ENCODE measurements at regions of chr3 and their contacts with region 1.

Region 1: DNA sequence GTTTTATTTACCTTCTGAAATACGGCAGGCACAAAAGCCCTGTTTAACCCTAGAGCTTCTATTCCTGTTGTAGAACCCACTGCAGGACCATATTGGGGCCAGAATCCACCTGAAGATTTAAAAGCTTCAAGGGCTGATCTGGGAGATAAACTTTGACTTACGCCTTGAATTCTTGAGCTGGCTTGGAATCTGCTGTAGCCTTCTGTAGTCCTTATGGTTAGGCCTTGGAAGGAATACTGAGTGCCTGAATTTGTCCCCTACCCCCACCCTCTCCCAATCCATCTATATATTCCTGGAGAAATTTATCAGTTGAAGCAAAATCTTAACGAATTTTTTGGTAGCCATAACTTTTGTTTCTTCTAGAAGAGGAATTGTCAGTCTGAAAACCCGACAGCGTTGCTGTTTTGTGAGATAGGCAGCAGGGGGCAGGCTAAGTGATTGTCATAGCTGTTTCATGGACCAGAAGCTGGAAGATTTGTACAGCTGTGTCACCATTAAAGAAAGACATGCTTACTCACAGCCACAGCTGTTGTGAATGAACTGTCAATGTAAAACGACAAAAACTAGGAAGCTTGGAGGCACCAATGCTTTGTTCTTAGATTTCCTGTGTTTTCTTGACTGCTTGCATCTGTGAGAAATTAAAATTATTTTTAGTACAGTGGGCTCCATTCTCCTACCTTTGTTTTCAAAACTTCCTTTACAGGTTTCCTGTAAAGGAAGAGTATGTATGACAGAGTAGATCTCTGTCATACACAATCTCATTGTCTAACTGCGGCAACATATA is 12.8 kb downstream of the LXN start:
- DNase-seq: peak; percentile 23 to 56 (median 36)
- H3K4me3 ChIP-seq: no peak overlapping the region
- H3K27ac ChIP-seq: no peak overlapping the region
- H3K4me1 ChIP-seq: no peaks in the 10 kb centered on the region
- H3K27me3 ChIP-seq: no peaks in the 10 kb centered on the region
- CTCF ChIP-seq: peak; percentile 25 to 50 (median 40)
- EP300 ChIP-seq: no peak
- POLR2A ChIP-seq: no peak

Region 2: DNA sequence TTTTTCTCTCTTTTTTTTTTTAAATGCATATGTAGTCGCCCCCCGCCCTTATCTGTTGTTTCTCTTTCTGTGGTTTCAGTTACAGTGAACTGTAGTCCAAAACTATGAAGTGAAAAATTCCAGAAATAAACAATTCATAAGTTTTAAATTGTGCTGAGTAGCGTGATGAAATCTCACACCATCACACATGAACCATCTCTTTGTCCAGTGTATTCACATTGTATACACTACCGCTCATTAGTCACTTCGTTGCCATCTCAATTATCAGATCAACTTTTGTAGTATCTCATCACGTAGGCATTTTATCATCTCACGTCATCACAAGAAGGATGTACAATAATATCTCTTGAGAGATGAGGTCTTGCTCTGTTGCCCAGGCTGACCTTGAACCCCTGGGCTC is 151.2 kb before region 1 on chr3:
- intact Hi-C with region 1: no loop called
- DNase-seq: no peak
- H3K4me3 ChIP-seq: no peak overlapping the region
- H3K27ac ChIP-seq: no peak overlapping the region
- H3K4me1 ChIP-seq: no peaks in the 10 kb centered on the region
- H3K27me3 ChIP-seq: no peaks in the 10 kb centered on the region
- CTCF ChIP-seq: no peak
- EP300 ChIP-seq: no peak
- POLR2A ChIP-seq: no peak

Region 3: DNA sequence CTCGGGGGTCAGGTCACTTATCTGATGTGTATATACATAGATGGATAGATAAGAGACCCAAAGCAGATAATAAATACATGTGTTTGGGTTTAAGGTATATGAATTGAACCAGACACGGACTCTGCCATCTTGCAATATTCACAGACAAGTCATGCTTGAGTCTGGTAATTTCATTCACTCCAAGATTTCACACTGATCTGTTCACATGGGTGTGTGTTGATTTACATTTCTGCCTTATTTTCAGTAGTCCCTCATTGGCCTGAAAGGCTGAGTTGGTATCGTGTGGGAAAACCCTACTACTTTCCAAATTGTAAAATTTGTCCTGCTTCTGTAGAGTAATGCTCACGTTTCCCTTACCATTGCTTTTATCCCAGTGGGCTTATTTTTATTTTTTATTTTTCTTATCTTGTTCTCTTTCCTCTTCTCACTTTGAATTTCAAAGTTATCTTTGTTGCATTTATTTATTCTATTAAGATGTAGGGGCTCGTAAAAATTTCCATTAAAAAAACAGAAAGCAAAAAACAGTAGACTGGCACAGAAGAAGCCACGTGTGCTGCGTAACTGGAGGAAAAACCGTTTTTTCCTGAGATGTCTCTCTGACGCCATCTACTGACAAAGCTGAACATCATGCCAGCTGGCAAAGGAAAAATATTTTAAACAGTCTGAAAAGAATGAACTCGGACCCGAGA is 131.4 kb after region 1 on chr3:
- intact Hi-C with region 1: loop called in 2 of 4 experiments (anchors 5 to 10 kb)
- DNase-seq: peak in 1 of 5 donors; percentile 45
- H3K4me3 ChIP-seq: peak overlapping the region; percentile 21
- H3K27ac ChIP-seq: no peak overlapping the region
- H3K4me1 ChIP-seq: no peaks in the 10 kb centered on the region
- H3K27me3 ChIP-seq: no peaks in the 10 kb centered on the region
- CTCF ChIP-seq: peak; percentile 71 to 83 (median 73)
- EP300 ChIP-seq: no peak
- POLR2A ChIP-seq: no peak

Region 4: DNA sequence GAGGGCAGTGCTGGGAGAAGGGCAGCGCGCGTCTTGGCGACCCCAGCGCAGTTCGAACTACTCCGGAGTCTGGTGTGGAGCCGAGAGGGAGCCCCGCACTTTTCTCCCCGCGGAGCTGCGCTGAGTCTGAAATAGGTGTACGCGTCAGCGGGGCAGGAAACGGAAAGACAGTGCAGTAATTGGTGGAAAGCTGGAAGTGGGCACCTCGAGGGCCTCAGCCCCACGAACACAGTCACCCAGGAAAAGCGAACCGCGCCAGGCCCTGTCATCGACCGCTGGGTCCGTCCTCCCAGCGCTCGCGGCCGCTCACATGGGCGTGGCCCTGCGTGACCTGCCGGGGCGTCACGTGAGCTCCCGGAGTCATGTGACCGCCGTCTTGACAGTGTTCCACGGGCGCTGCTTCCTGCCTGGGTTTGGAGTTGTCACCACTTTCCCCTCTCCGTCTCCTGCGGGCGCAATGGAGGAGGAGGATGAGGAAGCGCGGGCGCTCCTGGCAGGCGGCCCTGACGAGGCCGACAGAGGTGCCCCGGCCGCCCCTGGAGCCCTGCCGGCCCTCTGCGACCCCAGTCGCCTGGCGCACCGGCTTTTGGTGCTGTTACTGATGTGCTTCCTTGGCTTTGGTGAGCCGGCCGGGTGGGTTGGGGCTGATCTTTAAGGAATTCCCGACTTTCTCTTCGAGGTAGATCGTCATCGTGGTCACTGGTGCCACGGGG is 142.2 kb after region 1 on chr3 and contains the start of gene MFSD1:
- intact Hi-C with region 1: loop called in 2 of 4 experiments (anchors 10 kb)
- DNase-seq: peak; percentile 92 to 95 (median 93)
- H3K4me3 ChIP-seq: peak within 1 kb of the TSS; percentile 49
- H3K27ac ChIP-seq: peak within 1 kb of the TSS; percentile 51 to 83
- H3K4me1 ChIP-seq: peaks cover 2% of the 10 kb centered on the region
- H3K27me3 ChIP-seq: no peaks in the 10 kb centered on the region
- CTCF ChIP-seq: no peak
- EP300 ChIP-seq: no peak
- POLR2A ChIP-seq: peak; percentile 71
- total RNA-seq, gene MFSD1: 27.7 to 63.8 (median 43.0) TPM

Measured in ovary (tissue), 10 donors.